ENCODE measurements at regions of chr12 and their contacts with region 1.

Region 1: GRCh38 chr12:94789510-94790225 is 139.3 kb upstream of the TMCC3 start:
- DNase-seq: no peak
- ATAC-seq: no peak
- H3K4me3 ChIP-seq: no peak overlapping the region
- H3K4me3 Mint-ChIP-seq: no peak overlapping the region
- H3K27ac ChIP-seq: no peak overlapping the region
- H3K27ac Mint-ChIP-seq: no peak overlapping the region
- H3K4me1 ChIP-seq: peaks cover 0 to 11% of the 10 kb centered on the region in 2 experiments
- H3K4me1 Mint-ChIP-seq: peaks cover 4 to 20% (median 9%) of the 10 kb centered on the region in 3 donors
- H3K27me3 ChIP-seq: no peaks in the 10 kb centered on the region
- H3K27me3 Mint-ChIP-seq: peaks cover 0 to 3% of the 10 kb centered on the region in 2 donors

Region 2: GRCh38 chr12:93719710-93720109 is 1070.0 kb before region 1 on chr12:
- CTCF ChIA-PET with region 1: no interaction called
- POLR2A ChIA-PET with region 1: interaction called in 1 of 2 experiments, 17 read pairs
- DNase-seq: no peak
- ATAC-seq: no peak
- H3K4me3 ChIP-seq: no peak overlapping the region
- H3K4me3 Mint-ChIP-seq: no peak overlapping the region
- H3K27ac ChIP-seq: no peak overlapping the region
- H3K27ac Mint-ChIP-seq: no peak overlapping the region
- H3K4me1 ChIP-seq: no peaks in the 10 kb centered on the region
- H3K4me1 Mint-ChIP-seq: peaks cover 0 to 2% (median 0%) of the 10 kb centered on the region in 3 donors
- H3K27me3 ChIP-seq: no peaks in the 10 kb centered on the region
- H3K27me3 Mint-ChIP-seq: no peaks in the 10 kb centered on the region

Measured in T-cell (primary cell).